Motor neuron (in vitro differentiated cells): ENCODE measurements at regions of chr12 and their contacts with region 1.

Region 1: GRCh38 chr12:115916910-115917668 is 360.4 kb downstream of the MED13L start:
- ATAC-seq: peak; percentile 49 to 88 (median 58)
- H3K4me3 ChIP-seq: peak overlapping the region; percentile 9 to 20 (median 18)
- H3K27ac ChIP-seq: no peak overlapping the region
- H3K4me1 ChIP-seq: peaks cover 0 to 3% of the 10 kb centered on the region in 2 donors

Region 2: DNA sequence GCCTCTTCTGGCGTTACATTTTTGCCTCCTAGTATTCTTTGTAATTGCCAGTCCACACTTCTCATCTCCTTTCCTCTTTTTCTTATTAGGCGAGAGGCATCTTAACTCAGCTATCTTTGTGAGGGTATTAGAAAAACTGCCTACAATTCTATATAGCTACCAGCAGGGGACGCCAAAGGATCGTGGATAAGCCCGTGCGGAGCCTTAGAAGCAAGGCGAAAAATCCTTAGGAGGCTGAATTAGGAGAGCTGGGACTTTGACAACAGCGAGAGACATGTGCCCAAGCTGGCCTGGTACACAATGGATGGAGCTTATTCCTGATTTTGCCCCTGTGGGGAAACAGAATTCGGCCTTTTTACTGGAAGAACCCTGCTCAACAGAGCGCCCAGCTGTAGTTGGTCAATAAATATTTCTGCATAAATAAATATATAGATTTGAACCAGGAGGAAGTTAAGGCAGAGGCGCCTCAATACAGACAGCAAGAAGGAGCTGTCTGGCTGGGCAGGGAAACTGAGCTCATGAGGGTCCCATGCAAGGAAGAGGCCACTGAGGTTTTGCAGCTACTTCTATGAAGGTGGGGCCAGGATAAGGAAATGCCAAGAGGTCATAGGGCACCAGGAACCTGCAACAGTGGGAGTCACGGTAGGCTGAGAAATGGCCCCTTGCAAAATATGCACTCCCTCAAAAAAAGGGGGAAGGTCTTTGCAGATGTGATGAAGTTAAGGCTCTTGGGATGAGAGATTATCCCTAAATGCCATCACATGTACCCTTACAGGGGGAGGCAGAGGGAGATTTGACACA is 1936.4 kb before region 1 on chr12:
- in situ Hi-C with region 1: loop called in 3 of 9 experiments (anchors 25 kb)
- ATAC-seq: peak; percentile 54 to 85 (median 60)
- H3K4me3 ChIP-seq: no peak overlapping the region
- H3K27ac ChIP-seq: no peak overlapping the region
- H3K4me1 ChIP-seq: no peaks in the 10 kb centered on the region

Region 3: GRCh38 chr12:116382686-116383531 is 465.8 kb after region 1 on chr12:
- in situ Hi-C with region 1: no loop called
- ATAC-seq: peak in 7 of 8 experiments; percentile 30 to 76 (median 39)
- H3K4me3 ChIP-seq: no peak overlapping the region
- H3K27ac ChIP-seq: no peak overlapping the region
- H3K4me1 ChIP-seq: peaks cover 25 to 26% of the 10 kb centered on the region in 2 donors